Breast epithelium (tissue), 4 donors: ENCODE measurements at regions of chr2 and their contacts with region 1.

Region 1: DNA sequence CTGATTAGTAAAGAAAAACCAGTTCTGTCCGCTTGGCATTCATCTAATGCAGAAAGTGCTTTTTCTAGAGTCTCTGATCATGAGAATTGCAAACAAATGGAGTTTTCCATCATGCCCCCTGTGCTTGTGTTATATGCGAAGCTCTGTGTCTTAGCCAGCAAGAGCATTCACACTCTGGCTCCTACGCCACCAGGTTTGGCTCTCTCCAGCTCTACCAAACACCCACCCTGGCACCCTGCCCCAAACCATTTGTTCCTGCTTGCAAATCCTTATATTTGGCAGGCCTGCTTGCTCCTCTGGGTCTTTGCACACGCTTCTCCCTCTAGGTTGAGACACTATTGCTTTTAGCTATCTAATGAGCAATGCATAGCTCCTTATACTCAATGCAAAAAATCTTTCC is 204.1 kb upstream of the CYRIA start:
- DNase-seq: no peak
- H3K4me3 ChIP-seq: no peak overlapping the region
- H3K27ac ChIP-seq: no peak overlapping the region
- H3K4me1 ChIP-seq: no peaks in the 10 kb centered on the region
- H3K27me3 ChIP-seq: no peaks in the 10 kb centered on the region
- CTCF ChIP-seq: no peak
- POLR2A ChIP-seq: no peak

Region 2: DNA sequence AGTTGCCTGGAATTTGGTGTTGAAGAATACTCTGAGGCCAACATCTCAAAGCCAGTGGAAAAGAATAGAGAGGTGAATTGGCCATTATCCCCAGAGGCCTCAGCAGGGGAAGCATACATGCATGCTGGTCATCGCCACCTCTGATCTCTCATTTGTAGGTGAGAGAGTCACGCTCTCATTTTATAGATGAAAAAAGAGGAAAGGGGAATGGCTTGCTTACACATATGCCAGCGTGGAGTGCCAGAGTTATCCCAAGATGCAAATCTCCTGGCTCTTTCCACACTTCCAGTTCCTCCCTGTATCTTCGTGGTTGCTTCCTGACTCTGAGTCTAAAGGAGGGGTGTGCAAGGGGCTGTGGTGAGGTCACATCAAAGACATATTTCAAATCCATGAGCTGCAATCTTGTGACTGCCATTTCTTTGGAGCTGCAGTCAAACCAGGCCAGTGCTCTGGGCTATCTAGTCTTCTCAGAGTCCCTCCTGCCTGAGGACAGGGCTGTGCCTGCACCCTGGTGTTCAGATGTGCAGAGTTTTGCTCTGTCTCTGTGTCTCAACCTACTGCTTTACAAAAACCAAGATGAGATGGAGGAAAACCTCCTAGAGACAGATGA is 604.7 kb before region 1 on chr2:
- intact Hi-C with region 1: loop called (anchors 5 kb)
- DNase-seq: no peak
- H3K4me3 ChIP-seq: no peak overlapping the region
- H3K27ac ChIP-seq: no peak overlapping the region
- H3K4me1 ChIP-seq: no peaks in the 10 kb centered on the region
- H3K27me3 ChIP-seq: no peaks in the 10 kb centered on the region
- CTCF ChIP-seq: no peak
- POLR2A ChIP-seq: no peak